ENCODE measurements at regions of chr3 and their contacts with region 1.

Region 1: DNA sequence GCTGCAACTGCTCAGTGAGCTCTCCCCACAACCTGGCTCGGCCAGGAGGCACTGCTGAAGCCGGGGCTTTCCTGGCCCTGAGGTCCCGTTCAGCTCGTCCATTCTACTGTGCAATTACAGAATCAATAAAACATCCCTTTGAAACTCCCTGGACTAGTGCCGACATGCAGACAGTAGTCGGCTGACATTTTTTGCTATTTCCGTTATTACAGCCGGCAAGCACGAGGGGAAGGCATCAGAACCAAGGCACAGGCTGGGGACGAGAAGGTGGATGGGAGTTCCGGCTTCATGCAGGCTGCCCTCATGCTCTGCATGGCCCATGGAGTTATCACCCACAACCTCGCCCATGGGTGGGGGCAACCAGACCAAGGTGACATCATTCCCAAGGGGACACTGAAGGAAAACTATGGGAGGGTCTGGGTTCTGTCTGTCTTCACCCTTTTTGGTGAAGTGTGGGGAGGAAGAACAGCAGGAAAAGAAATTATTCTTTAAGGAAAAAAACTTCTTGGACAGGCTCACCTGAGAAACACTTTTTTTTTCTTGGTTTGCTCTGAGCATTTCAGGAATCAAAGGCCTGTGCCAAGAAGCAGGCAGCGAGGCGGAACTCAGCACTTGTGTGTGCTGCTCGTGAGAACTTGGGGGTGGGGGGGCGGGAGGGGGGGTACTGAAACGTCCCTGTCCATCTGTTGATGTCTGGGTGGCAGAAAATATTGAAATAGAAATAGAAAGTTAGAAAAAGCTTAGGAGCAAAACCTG is 154.5 kb downstream of the FOXP1 start:
- DNase-seq: no peak
- H3K4me3 ChIP-seq: no peak overlapping the region
- H3K27ac ChIP-seq: no peak overlapping the region
- H3K4me1 ChIP-seq: peaks cover 0 to 9% (median 6%) of the 10 kb centered on the region in 4 experiments; a peak in 4 of 7 replicates
- H3K27me3 ChIP-seq: no peaks in the 10 kb centered on the region
- CTCF ChIP-seq: no peak
- EP300 ChIP-seq: no peak
- POLR2A ChIP-seq: no peak
- RAD21 ChIP-seq: no peak

Region 2: DNA sequence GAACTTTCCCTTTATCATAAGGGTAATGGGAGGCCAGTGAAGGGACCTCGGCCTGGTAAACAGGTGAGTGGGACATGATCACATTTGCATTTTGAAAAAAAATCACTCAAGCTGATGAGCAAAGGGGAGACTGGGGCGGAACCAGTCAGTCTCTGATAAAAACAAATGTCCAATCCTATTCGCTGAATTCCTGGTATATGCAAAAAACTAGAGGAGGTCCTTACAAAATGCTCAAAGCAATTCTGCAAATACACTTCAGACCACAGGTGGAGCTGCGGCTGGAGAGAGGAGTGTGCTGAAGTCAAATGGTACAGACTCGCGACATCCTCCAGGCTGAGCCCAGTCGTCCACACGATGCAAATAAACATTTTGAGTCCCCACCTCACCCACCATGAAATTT is 12.1 kb before region 1 on chr3:
- CTCF ChIA-PET with region 1: interaction called, 17 read pairs
- POLR2A ChIA-PET with region 1: interaction called, 3 read pairs
- DNase-seq: peak in 1 of 2 experiments; percentile 25
- H3K4me3 ChIP-seq: no peak overlapping the region
- H3K27ac ChIP-seq: no peak overlapping the region
- H3K4me1 ChIP-seq: peaks cover 0 to 5% (median 2%) of the 10 kb centered on the region in 4 experiments; a peak in 2 of 7 replicates
- H3K27me3 ChIP-seq: no peaks in the 10 kb centered on the region
- CTCF ChIP-seq: peak; percentile 28 to 75 (median 43); a peak in 3 of 4 replicates
- EP300 ChIP-seq: no peak
- POLR2A ChIP-seq: no peak
- RAD21 ChIP-seq: peak; percentile 46 to 58